CD4-positive, alpha-beta T cell (primary cell): ENCODE measurements at regions of chr15 and their contacts with region 1.

Region 1: DNA sequence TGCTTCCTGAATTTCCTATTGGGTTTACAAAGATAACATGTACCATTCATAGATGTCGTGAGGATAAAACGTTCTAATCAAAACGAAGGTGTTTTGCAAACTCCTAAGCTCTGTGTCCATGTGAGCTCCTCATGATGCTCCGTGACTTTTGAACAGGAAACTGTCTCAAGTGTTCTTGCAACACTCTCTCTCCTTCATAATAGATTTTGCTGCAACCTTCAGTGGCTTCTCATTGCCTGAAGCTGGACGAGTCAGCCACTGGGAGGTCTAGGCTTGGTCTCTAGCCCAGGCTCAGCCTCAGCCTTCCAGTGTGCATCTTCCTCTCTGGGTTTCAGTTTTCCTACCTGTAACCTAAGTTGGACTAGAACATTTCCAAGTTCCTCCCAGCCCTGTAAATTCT is 18.7 kb upstream of the BCL2A1 start:
- DNase-seq: peak in 2 of 14 experiments; percentile 40 to 53
- ATAC-seq: no peak
- H3K4me3 ChIP-seq: no peak overlapping the region
- H3K4me3 Mint-ChIP-seq: no peak overlapping the region
- H3K27ac ChIP-seq: no peak overlapping the region
- H3K27ac Mint-ChIP-seq: no peak overlapping the region
- H3K4me1 ChIP-seq: peaks cover 4% of the 10 kb centered on the region
- H3K4me1 Mint-ChIP-seq: peaks cover 4% of the 10 kb centered on the region
- H3K27me3 ChIP-seq: no peaks in the 10 kb centered on the region
- H3K27me3 Mint-ChIP-seq: no peaks in the 10 kb centered on the region
- CTCF ChIP-seq: no peak

Region 2: GRCh38 chr15:79380755-79381497 is 608.8 kb before region 1 on chr15:
- CTCF ChIA-PET with region 1: interaction called, 8 read pairs
- POLR2A ChIA-PET with region 1: interaction called, 4 read pairs
- intact Hi-C with region 1: loop called (anchors 1 kb)
- DNase-seq: peak; percentile 62 to 81 (median 71)
- ATAC-seq: peak; percentile 89
- H3K4me3 ChIP-seq: no peak overlapping the region
- H3K4me3 Mint-ChIP-seq: no peak overlapping the region
- H3K27ac ChIP-seq: no peak overlapping the region
- H3K27ac Mint-ChIP-seq: peak overlapping the region; percentile 13
- H3K4me1 ChIP-seq: no peaks in the 10 kb centered on the region
- H3K4me1 Mint-ChIP-seq: peaks cover 14% of the 10 kb centered on the region
- H3K27me3 ChIP-seq: no peaks in the 10 kb centered on the region
- H3K27me3 Mint-ChIP-seq: no peaks in the 10 kb centered on the region
- CTCF ChIP-seq: peak; percentile 85

Region 3: GRCh38 chr15:79853458-79854328 is 136.0 kb before region 1 on chr15:
- CTCF ChIA-PET with region 1: interaction called, 4 read pairs
- POLR2A ChIA-PET with region 1: no interaction called
- intact Hi-C with region 1: loop called (anchors 2 kb)
- DNase-seq: peak; percentile 35 to 79 (median 46)
- ATAC-seq: peak; percentile 99
- H3K4me3 ChIP-seq: no peak overlapping the region
- H3K4me3 Mint-ChIP-seq: no peak overlapping the region
- H3K27ac ChIP-seq: no peak overlapping the region
- H3K27ac Mint-ChIP-seq: peak overlapping the region; percentile 22
- H3K4me1 ChIP-seq: no peaks in the 10 kb centered on the region
- H3K4me1 Mint-ChIP-seq: peaks cover 24% of the 10 kb centered on the region
- H3K27me3 ChIP-seq: no peaks in the 10 kb centered on the region
- H3K27me3 Mint-ChIP-seq: no peaks in the 10 kb centered on the region
- CTCF ChIP-seq: peak; percentile 98

Region 4: GRCh38 chr15:79929435-79929834 is 60.2 kb before region 1 on chr15:
- CTCF ChIA-PET with region 1: no interaction called
- POLR2A ChIA-PET with region 1: no interaction called
- intact Hi-C with region 1: loop called in 1 of 2 experiments (anchors 2 kb)
- DNase-seq: no peak
- ATAC-seq: no peak
- H3K4me3 ChIP-seq: no peak overlapping the region
- H3K4me3 Mint-ChIP-seq: peak overlapping the region; percentile 2
- H3K27ac ChIP-seq: no peak overlapping the region
- H3K27ac Mint-ChIP-seq: no peak overlapping the region
- H3K4me1 ChIP-seq: peaks cover 7% of the 10 kb centered on the region
- H3K4me1 Mint-ChIP-seq: peaks cover 9% of the 10 kb centered on the region
- H3K27me3 ChIP-seq: no peaks in the 10 kb centered on the region
- H3K27me3 Mint-ChIP-seq: peaks cover 4% of the 10 kb centered on the region
- CTCF ChIP-seq: no peak